IMR-90 (cell line): ENCODE measurements at regions of chr1 and their contacts with region 1.

Region 1: GRCh38 chr1:94801919-94802546 is 18.1 kb upstream of the SLC44A3 start:
- DNase-seq: peak; percentile 94
- ATAC-seq: peak; percentile 76
- H3K4me3 ChIP-seq: peak overlapping the region; percentile 13; the same call in 1 of the 2 replicates
- H3K27ac ChIP-seq: peak overlapping the region; percentile 90
- H3K4me1 ChIP-seq: peaks cover 14% of the 10 kb centered on the region
- H3K27me3 ChIP-seq: no peaks in the 10 kb centered on the region
- CTCF ChIP-seq: peak; percentile 88
- POLR2A ChIP-seq: 0 out of 2 replicates have a peak, but pooled peaks have one; percentile 40
- RAD21 ChIP-seq: peak; percentile 95

Region 2: DNA sequence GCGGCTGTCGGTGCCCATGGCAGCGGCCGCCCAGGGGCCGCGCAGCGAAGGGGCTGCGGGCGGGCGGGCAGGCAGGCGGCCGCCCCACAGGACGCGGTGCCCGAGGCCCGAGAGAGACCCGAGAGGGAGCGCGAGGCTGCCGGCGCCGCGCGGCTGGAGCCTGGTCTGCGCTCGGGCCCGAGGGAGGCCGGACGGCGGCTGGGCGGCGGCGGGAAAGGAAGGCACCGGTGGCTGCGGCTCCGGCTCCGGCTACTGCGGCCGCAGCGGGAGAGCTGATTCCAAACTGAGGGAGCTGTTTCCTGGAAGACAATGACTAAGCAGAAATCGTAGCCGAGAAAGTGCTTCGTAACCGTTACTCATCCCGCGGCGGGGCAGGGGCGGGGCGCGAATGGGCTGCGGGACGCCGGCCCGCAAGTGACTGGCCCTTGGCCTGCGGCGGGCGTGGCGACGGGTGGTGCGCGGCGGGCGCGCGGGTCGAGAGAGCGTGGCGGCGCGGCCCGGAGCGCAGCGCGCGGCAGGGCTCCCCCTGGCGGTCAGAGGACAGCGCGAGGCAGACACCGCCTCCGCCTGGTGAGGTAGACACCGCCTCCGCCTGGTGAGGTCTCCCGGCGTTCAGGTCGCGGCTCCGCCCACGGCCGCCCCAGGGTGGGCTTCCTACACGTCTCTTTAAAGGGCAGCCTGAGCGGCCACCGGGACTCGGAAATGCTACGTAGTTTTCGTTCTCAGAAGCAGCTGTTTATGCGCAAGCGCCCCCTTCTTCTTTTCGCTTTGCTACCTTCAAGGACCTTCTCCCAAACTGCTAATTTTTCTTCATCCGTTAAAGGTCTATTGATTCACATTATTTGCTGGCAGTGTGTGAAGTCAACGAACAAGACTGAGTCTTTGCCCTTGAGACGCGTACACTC is 892.6 kb before region 1 on chr1 and contains the start of gene GCLM:
- CTCF ChIA-PET with region 1: no interaction called
- POLR2A ChIA-PET with region 1: no interaction called
- dilution Hi-C with region 1: no loop called
- in situ Hi-C with region 1: no loop called
- intact Hi-C with region 1: loop called (anchors 10 kb)
- DNase-seq: peak; percentile 94
- ATAC-seq: peak; percentile 94
- H3K4me3 ChIP-seq: peak within 1 kb of the TSS; percentile 74
- H3K27ac ChIP-seq: peak within 1 kb of the TSS; percentile 32
- H3K4me1 ChIP-seq: peaks cover 4% of the 10 kb centered on the region
- H3K27me3 ChIP-seq: no peaks in the 10 kb centered on the region
- CTCF ChIP-seq: peak; percentile 98
- POLR2A ChIP-seq: peak; percentile 92
- RAD21 ChIP-seq: peak; percentile 41; the same call in 1 of the 2 replicates
- total RNA-seq, gene GCLM: 18.3 and 20.1 TPM in 2 replicates

Region 3: GRCh38 chr1:94061513-94062443 is 740.3 kb before region 1 on chr1:
- CTCF ChIA-PET with region 1: no interaction called
- POLR2A ChIA-PET with region 1: no interaction called
- dilution Hi-C with region 1: no loop called
- in situ Hi-C with region 1: loop called (anchors 25 kb)
- intact Hi-C with region 1: loop called (anchors 1 kb)
- DNase-seq: peak; percentile 80
- ATAC-seq: peak; percentile 95
- H3K4me3 ChIP-seq: no peak overlapping the region
- H3K27ac ChIP-seq: peak overlapping the region; percentile 18; the same call in 1 of the 2 replicates
- H3K4me1 ChIP-seq: peaks cover 19% of the 10 kb centered on the region
- H3K27me3 ChIP-seq: no peaks in the 10 kb centered on the region
- CTCF ChIP-seq: peak; percentile 95
- POLR2A ChIP-seq: peak; percentile 49; the same call in 1 of the 2 replicates
- RAD21 ChIP-seq: peak; percentile 95

Region 4: GRCh38 chr1:94481473-94481933 is 320.5 kb before region 1 on chr1:
- CTCF ChIA-PET with region 1: interaction called, 4 read pairs
- POLR2A ChIA-PET with region 1: no interaction called
- dilution Hi-C with region 1: no loop called
- in situ Hi-C with region 1: no loop called
- intact Hi-C with region 1: loop called (anchors 1 kb)
- DNase-seq: peak; percentile 74
- ATAC-seq: peak; percentile 98
- H3K4me3 ChIP-seq: no peak overlapping the region
- H3K27ac ChIP-seq: no peak overlapping the region
- H3K4me1 ChIP-seq: no peaks in the 10 kb centered on the region
- H3K27me3 ChIP-seq: no peaks in the 10 kb centered on the region
- CTCF ChIP-seq: peak; percentile 78
- POLR2A ChIP-seq: no peak
- RAD21 ChIP-seq: peak; percentile 73

Region 5: DNA sequence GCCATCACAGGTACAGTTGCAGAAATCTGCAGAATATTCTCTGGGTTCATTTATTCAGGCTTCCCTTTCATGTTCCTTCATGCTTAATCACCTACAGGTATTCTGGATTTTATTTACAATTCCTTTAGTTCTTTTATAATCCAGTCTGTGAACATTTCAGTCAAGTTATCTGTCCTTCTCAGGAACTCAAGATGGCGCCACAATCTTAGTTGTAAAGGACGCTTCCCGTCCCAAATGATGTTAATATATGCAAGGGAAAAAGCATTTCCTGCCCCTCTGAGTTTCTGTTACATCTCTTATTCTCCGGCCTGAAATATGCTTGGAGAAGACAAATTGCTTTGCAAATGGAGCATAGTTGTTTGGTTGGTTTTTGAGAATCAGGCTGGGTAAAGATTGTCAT is 279.7 kb before region 1 on chr1:
- CTCF ChIA-PET with region 1: interaction called, 10 read pairs
- POLR2A ChIA-PET with region 1: no interaction called
- dilution Hi-C with region 1: loop called (anchors 25 kb)
- in situ Hi-C with region 1: loop called (anchors 5 kb)
- intact Hi-C with region 1: loop called (anchors 1 kb)
- DNase-seq: peak; percentile 72
- ATAC-seq: peak; percentile 46
- H3K4me3 ChIP-seq: no peak overlapping the region
- H3K27ac ChIP-seq: no peak overlapping the region
- H3K4me1 ChIP-seq: peaks cover 3% of the 10 kb centered on the region; the same call in 1 of the 2 replicates
- H3K27me3 ChIP-seq: no peaks in the 10 kb centered on the region
- CTCF ChIP-seq: peak; percentile 73
- POLR2A ChIP-seq: no peak
- RAD21 ChIP-seq: peak; percentile 82

Region 6: DNA sequence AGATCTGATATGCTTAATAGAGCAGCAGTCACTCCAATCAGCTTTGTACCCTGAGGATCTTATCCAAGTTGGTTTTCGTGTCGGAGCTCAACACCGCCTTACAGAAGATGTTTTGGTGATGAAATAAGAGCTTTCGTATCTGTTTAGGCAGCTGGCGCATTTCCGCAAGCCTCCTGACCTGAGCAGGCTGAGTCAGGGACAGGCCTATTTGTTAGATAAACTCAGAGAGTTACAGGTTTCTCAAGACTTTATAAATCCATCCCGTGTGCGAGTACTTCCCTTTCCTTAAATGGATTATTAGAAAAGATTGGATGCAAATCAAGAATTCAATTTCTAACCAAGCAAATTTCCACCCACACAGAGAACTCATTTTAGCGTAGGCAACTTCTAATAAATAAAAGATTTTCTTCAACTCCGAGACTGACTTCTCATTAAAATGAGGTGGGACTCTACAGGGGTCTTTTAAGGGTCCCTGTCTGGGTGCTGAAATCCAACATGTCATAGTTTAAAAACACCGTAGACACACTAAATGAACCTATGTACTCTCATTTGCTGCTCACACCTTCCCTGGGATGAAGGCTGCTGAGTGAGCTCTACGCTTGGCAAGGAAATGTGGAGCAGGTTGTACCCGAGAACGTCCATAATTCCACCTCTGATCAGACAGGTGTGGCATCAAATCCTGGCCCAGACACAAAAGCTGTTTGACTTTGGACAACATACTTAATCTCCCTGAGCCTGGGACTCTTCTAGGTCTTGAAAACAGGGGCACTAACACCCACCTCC is 153.6 kb before region 1 on chr1:
- CTCF ChIA-PET with region 1: interaction called, 3 read pairs
- POLR2A ChIA-PET with region 1: interaction called, 3 read pairs
- dilution Hi-C with region 1: no loop called
- in situ Hi-C with region 1: no loop called
- intact Hi-C with region 1: loop called (anchors 1 kb)
- DNase-seq: peak; percentile 100
- ATAC-seq: peak; percentile 77
- H3K4me3 ChIP-seq: no peak overlapping the region
- H3K27ac ChIP-seq: peak overlapping the region; percentile 99
- H3K4me1 ChIP-seq: peaks cover 25% of the 10 kb centered on the region
- H3K27me3 ChIP-seq: no peaks in the 10 kb centered on the region
- CTCF ChIP-seq: no peak
- POLR2A ChIP-seq: no peak
- RAD21 ChIP-seq: peak; percentile 12; the same call in 1 of the 2 replicates

Region 7: GRCh38 chr1:94832446-94832845 is 30.4 kb after region 1 on chr1:
- CTCF ChIA-PET with region 1: no interaction called
- POLR2A ChIA-PET with region 1: no interaction called
- dilution Hi-C with region 1: no loop called
- in situ Hi-C with region 1: no loop called
- intact Hi-C with region 1: no loop called
- DNase-seq: peak; percentile 34
- ATAC-seq: peak; percentile 71
- H3K4me3 ChIP-seq: no peak overlapping the region
- H3K27ac ChIP-seq: no peak overlapping the region
- H3K4me1 ChIP-seq: peaks cover 2% of the 10 kb centered on the region; the same call in 1 of the 2 replicates
- H3K27me3 ChIP-seq: no peaks in the 10 kb centered on the region
- CTCF ChIP-seq: no peak
- POLR2A ChIP-seq: no peak
- RAD21 ChIP-seq: no peak

Region 8: DNA sequence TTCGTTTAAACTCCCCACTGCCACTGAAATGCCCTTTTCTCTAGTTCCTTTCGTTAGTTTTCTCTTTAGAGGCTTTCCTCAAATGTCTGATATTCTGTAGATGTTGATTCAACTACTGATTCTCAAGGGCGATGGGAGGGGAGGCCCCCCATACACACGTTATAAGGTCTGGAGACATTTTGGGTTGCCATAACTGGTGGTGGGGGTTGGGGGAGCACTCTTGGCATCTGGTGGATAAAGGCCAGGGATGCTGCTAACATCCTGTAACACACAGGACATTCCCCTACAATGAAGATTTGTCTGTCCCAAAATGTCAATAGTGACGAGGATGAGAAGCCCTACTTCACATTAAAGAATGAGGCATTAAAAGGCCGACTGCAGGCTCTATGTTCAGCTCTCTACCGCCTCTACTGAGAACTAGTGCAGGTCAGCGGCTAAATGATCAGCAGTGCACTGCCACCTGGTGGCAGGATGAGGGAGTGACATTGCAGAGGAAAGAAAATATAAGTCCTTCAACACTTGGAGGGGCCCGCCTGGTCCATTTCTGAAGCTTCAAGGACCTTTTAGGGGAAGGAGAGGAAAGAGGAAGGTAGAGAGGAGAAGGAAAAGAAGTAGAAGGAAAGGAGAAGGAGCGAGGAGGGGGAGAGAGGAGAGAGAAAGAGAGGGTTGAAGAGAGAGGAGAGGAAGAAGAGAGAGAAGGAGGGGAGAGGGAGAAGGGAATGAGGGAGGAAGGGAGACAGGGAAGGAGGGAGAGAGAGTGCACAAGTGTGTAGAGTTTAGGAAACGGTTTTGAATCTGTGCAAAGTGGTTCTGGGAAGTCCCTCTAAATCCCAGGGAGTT is 241.3 kb after region 1 on chr1:
- CTCF ChIA-PET with region 1: interaction called, 9 read pairs
- POLR2A ChIA-PET with region 1: interaction called, 5 read pairs
- dilution Hi-C with region 1: no loop called
- in situ Hi-C with region 1: no loop called
- intact Hi-C with region 1: loop called (anchors 1 kb)
- DNase-seq: peak; percentile 86
- ATAC-seq: peak; percentile 90
- H3K4me3 ChIP-seq: no peak overlapping the region
- H3K27ac ChIP-seq: no peak overlapping the region
- H3K4me1 ChIP-seq: peaks cover 5% of the 10 kb centered on the region
- H3K27me3 ChIP-seq: no peaks in the 10 kb centered on the region
- CTCF ChIP-seq: peak; percentile 100
- POLR2A ChIP-seq: no peak
- RAD21 ChIP-seq: peak; percentile 97